ENCODE measurements at regions of chr11 and their contacts with region 1.

Region 1: GRCh38 chr11:2214527-2215229 is 43.1 kb upstream of the TH start:
- DNase-seq: no peak
- ATAC-seq: no peak
- H3K4me3 ChIP-seq: no peak overlapping the region
- H3K27ac ChIP-seq: no peak overlapping the region
- H3K4me1 ChIP-seq: no peaks in the 10 kb centered on the region
- H3K27me3 ChIP-seq: no peaks in the 10 kb centered on the region; the same call in 1 of the 2 replicates
- CTCF ChIP-seq: no peak

Region 2: GRCh38 chr11:2186669-2187279 is 27.9 kb before region 1 on chr11:
- CTCF ChIA-PET with region 1: no interaction called
- POLR2A ChIA-PET with region 1: no interaction called
- in situ Hi-C with region 1: no loop called
- intact Hi-C with region 1: no loop called
- DNase-seq: no peak
- ATAC-seq: peak; percentile 85
- H3K4me3 ChIP-seq: no peak overlapping the region
- H3K27ac ChIP-seq: no peak overlapping the region
- H3K4me1 ChIP-seq: 0 out of 2 replicates have a peak, but pooled peaks cover 3% of the 10 kb centered on the region
- H3K27me3 ChIP-seq: no peaks in the 10 kb centered on the region
- CTCF ChIP-seq: peak; percentile 97

Region 3: DNA sequence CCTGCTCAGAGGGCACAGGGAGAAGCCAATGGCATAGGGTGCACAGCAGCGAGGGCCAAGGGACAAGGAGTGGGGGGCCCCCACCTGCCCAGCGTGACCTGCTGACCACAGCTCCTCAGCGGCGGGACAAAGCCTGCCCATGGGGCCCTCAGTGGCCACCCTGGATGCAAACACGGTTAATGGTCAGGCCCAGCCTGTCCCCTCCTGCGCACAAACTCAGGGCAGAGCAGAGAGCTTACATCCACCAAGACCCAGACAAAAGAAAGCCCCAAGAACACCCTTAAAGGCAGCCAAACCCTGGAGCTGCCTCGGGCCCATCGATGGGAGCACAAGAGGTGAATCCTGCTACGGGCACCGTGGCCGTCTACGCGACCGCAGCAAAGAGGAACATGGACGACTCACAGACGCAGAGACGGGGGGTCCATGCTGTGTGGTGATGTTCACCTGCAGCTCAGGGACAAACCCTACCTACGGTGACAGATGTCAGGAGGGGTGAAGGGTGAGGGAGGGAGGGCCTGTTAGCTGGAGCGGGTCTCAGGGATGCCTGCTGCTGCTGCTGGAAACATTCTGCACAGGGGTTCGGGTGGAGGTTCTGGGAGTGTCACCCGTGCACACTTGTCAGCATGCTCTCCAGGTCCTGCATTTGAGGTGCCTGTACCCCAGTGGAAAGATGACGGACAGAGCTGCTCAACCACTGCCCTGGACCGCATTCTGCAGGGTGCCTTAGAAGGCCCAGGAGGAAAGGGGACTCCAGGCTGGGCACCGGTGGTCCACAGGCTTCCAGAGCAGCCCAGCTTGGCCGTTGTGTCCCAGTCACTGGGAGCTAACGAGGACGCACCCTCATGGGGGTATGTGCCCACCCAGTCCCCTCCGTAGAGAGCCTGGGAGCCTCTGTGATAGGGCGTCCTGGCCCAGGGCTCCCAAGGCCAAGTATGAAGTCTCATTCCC is 44.1 kb after region 1 on chr11:
- CTCF ChIA-PET with region 1: interaction called, 10 read pairs
- POLR2A ChIA-PET with region 1: no interaction called
- in situ Hi-C with region 1: no loop called
- intact Hi-C with region 1: no loop called
- DNase-seq: no peak
- ATAC-seq: no peak
- H3K4me3 ChIP-seq: no peak overlapping the region
- H3K27ac ChIP-seq: no peak overlapping the region
- H3K4me1 ChIP-seq: no peaks in the 10 kb centered on the region
- H3K27me3 ChIP-seq: no peaks in the 10 kb centered on the region
- CTCF ChIP-seq: no peak